IMR-90 (cell line): ENCODE measurements at regions of chr18 and their contacts with region 1.

Region 1: DNA sequence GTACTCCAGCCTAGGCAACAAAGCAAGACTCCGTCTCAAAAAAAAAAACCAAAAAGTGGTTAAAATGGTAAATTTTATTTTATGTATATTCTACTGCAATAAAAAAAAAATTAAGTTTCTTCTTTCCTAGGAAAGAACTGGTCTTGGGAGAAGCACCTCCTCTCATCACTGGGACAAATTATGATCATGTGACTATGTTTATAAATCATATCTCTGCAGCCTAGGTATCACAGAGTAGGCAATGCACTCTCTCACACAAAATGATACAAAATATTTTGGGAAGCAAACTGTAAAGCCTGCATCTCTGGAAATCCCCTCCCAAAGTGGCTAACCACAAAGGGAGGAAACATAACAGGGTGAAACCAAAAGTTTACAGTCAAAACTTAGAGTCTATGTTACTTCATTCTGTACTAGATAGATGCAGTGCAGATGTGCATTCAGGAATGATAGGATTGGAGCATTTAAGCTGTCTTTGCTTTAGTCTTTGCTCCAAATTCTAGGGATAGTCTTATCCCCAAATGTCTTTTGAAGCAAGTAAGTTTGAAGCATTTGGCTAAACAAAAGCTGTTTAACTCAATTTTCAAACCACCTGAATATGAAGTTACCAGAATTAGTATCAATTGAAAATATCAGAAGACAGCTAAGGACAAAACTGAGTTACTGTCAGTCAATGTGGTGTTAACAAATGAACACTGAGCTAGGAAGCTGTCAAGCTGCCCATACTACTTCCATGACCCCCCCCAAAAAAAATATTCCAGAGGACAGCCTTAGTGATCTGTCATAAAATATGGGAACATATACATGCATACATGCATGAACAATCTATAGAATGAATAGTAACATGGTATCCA is 21.1 kb upstream of the MALT1 start:
- DNase-seq: peak; percentile 77
- ATAC-seq: peak; percentile 76
- H3K4me3 ChIP-seq: no peak overlapping the region
- H3K27ac ChIP-seq: no peak overlapping the region
- H3K4me1 ChIP-seq: peaks cover 3% of the 10 kb centered on the region; the same call in 1 of the 2 replicates
- H3K27me3 ChIP-seq: no peaks in the 10 kb centered on the region
- CTCF ChIP-seq: no peak
- POLR2A ChIP-seq: no peak
- RAD21 ChIP-seq: no peak

Region 2: GRCh38 chr18:58618822-58619595 is 31.2 kb before region 1 on chr18:
- CTCF ChIA-PET with region 1: no interaction called
- POLR2A ChIA-PET with region 1: no interaction called
- dilution Hi-C with region 1: no loop called
- in situ Hi-C with region 1: no loop called
- intact Hi-C with region 1: loop called (anchors 1 kb)
- DNase-seq: peak; percentile 36
- ATAC-seq: peak; percentile 61
- H3K4me3 ChIP-seq: no peak overlapping the region
- H3K27ac ChIP-seq: no peak overlapping the region; the same call in 1 of the 2 replicates
- H3K4me1 ChIP-seq: peaks cover 2% of the 10 kb centered on the region; the same call in 1 of the 2 replicates
- H3K27me3 ChIP-seq: peaks cover 7% of the 10 kb centered on the region
- CTCF ChIP-seq: no peak
- POLR2A ChIP-seq: no peak
- RAD21 ChIP-seq: 0 out of 2 replicates have a peak, but pooled peaks have one; percentile 4

Region 3: GRCh38 chr18:59279193-59279592 is 629.0 kb after region 1 on chr18:
- CTCF ChIA-PET with region 1: no interaction called
- POLR2A ChIA-PET with region 1: no interaction called
- dilution Hi-C with region 1: no loop called
- in situ Hi-C with region 1: no loop called
- intact Hi-C with region 1: no loop called
- DNase-seq: no peak
- ATAC-seq: no peak
- H3K4me3 ChIP-seq: no peak overlapping the region
- H3K27ac ChIP-seq: no peak overlapping the region
- H3K4me1 ChIP-seq: no peaks in the 10 kb centered on the region
- H3K27me3 ChIP-seq: peaks cover 76% of the 10 kb centered on the region
- CTCF ChIP-seq: no peak
- POLR2A ChIP-seq: no peak
- RAD21 ChIP-seq: no peak